ENCODE measurements at regions of chr1 and their contacts with region 1.

Region 1: DNA sequence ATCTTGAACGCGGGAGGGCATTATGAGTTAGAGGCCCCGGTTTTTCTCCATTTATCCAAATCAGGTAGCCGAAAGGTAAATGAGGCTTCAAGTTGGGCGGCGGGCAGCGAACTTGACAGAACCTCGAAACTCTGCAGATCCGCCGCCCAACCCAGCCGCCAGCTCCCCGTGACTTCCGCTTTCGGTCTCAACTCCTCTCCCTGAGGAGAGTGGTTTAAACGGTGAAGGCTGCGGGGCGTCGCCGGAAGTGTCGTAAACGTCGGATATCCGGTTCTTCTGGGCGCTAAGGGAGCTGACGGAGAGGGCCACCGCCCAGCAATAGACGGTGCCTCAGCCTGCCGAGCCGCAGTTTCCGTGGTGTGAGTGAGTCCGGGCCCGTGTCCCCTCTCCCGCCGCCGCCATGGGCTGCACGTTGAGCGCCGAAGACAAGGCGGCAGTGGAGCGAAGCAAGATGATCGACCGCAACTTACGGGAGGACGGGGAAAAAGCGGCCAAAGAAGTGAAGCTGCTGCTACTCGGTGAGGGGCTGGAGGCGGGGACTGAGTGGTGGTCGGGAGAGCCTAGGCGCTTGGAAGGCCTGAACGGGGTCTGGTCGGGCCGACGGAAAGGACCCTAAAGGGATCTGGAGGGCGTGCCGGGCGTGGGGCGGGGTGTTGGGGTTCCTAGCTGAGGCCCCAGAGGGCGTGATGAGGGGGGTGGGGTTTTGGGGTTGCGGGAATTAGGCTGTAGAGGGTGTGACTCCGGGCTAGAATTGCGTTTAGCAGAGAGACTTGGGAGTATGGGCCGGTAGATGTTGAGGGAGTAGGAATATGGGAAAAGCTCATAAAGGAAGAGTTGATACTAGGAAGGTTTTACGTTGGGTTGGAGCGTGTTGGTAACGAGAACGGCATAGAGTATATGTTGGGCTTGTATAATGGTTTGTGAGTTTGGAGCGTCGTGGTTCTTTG is at the start of gene GNAI3:
- DNase-seq: peak; percentile 98 to 99 (median 98)
- H3K4me3 ChIP-seq: peak within 1 kb of the TSS; percentile 73 to 99 (median 96)
- H3K4me3 Mint-ChIP-seq: peak within 1 kb of the TSS; percentile 99 to 100
- H3K27ac ChIP-seq: peak within 1 kb of the TSS; percentile 96 to 99
- H3K27ac Mint-ChIP-seq: peak within 1 kb of the TSS; percentile 99 to 100 (median 100)
- H3K4me1 ChIP-seq: peaks cover 23 to 52% of the 10 kb centered on the region in 2 donors
- H3K4me1 Mint-ChIP-seq: peaks cover 50% of the 10 kb centered on the region
- H3K27me3 ChIP-seq: no peaks in the 10 kb centered on the region
- H3K27me3 Mint-ChIP-seq: no peaks in the 10 kb centered on the region
- CTCF ChIP-seq: no peak
- polyA plus RNA-seq, gene GNAI3: 3.0 to 14.2 (median 10.4) TPM

Region 2: GRCh38 chr1:109327285-109327684 is 221.3 kb before region 1 on chr1:
- intact Hi-C with region 1: no loop called
- DNase-seq: no peak
- H3K4me3 ChIP-seq: no peak overlapping the region
- H3K4me3 Mint-ChIP-seq: no peak overlapping the region
- H3K27ac ChIP-seq: no peak overlapping the region
- H3K27ac Mint-ChIP-seq: no peak overlapping the region
- H3K4me1 ChIP-seq: no peaks in the 10 kb centered on the region
- H3K4me1 Mint-ChIP-seq: no peaks in the 10 kb centered on the region
- H3K27me3 ChIP-seq: no peaks in the 10 kb centered on the region
- H3K27me3 Mint-ChIP-seq: no peaks in the 10 kb centered on the region
- CTCF ChIP-seq: no peak

Region 3: GRCh38 chr1:109532365-109533136 is 16.0 kb before region 1 on chr1:
- intact Hi-C with region 1: no loop called
- DNase-seq: peak; percentile 69 to 80 (median 77)
- H3K4me3 ChIP-seq: peak overlapping the region in 2 of 3 experiments; percentile 13 to 59
- H3K4me3 Mint-ChIP-seq: peak overlapping the region; percentile 61 to 75
- H3K27ac ChIP-seq: no peak overlapping the region
- H3K27ac Mint-ChIP-seq: peak overlapping the region in 3 of 7 donors; percentile 2 to 79 (median 27)
- H3K4me1 ChIP-seq: peaks cover 10 to 11% of the 10 kb centered on the region in 2 donors
- H3K4me1 Mint-ChIP-seq: peaks cover 9% of the 10 kb centered on the region
- H3K27me3 ChIP-seq: no peaks in the 10 kb centered on the region
- H3K27me3 Mint-ChIP-seq: peaks cover 0 to 5% (median 2%) of the 10 kb centered on the region in 3 donors
- CTCF ChIP-seq: peak; percentile 94

Region 4: DNA sequence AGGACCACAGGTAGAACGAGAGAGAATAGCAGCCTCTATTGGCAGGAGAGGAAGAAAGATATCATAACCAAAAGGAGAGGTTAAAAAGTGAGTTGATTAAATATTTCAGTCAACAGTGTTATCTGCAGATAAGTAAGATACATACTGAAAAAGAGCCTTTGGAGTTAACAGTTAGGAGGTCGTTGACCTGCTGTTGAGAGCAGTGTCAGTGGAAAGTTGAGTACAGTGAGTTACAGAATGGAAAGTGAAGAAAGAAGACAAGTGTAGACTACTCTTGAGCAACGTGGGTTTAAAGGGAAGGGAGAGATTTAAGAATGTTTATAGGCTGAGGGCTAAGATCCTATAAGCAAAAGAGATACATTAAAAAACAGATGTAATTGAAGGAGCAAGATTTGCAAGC is 40.6 kb after region 1 on chr1:
- intact Hi-C with region 1: loop called in 1 of 2 experiments (anchors 5 kb)
- DNase-seq: no peak
- H3K4me3 ChIP-seq: no peak overlapping the region
- H3K4me3 Mint-ChIP-seq: no peak overlapping the region
- H3K27ac ChIP-seq: peak overlapping the region in 1 of 2 donors; percentile 23
- H3K27ac Mint-ChIP-seq: peak overlapping the region in 3 of 7 donors; percentile 16 to 70 (median 17)
- H3K4me1 ChIP-seq: peaks cover 0 to 7% of the 10 kb centered on the region in 2 donors
- H3K4me1 Mint-ChIP-seq: peaks cover 10% of the 10 kb centered on the region
- H3K27me3 ChIP-seq: no peaks in the 10 kb centered on the region
- H3K27me3 Mint-ChIP-seq: no peaks in the 10 kb centered on the region
- CTCF ChIP-seq: no peak

Region 5: GRCh38 chr1:109620841-109621286 is 72.3 kb after region 1 on chr1:
- intact Hi-C with region 1: loop called (anchors 2 to 5 kb)
- DNase-seq: peak; percentile 96 to 99 (median 98)
- H3K4me3 ChIP-seq: peak overlapping the region; percentile 77 to 96 (median 96)
- H3K4me3 Mint-ChIP-seq: peak overlapping the region; percentile 92 to 97
- H3K27ac ChIP-seq: peak overlapping the region; percentile 99
- H3K27ac Mint-ChIP-seq: peak overlapping the region; percentile 99 to 100 (median 99)
- H3K4me1 ChIP-seq: peaks cover 69 to 77% of the 10 kb centered on the region in 2 donors
- H3K4me1 Mint-ChIP-seq: peaks cover 71% of the 10 kb centered on the region
- H3K27me3 ChIP-seq: no peaks in the 10 kb centered on the region
- H3K27me3 Mint-ChIP-seq: peaks cover 0 to 3% (median 2%) of the 10 kb centered on the region in 3 donors
- CTCF ChIP-seq: no peak

Measured in CD14-positive monocyte (primary cell).